PC-9 (cell line): ENCODE measurements at regions of chr16 and their contacts with region 1.

Region 1: GRCh38 chr16:66872943-66873684 is 7.2 kb upstream of the PDP2 start:
- DNase-seq: peak; percentile 90 to 93
- H3K4me3 ChIP-seq: peak overlapping the region; percentile 64
- H3K27ac ChIP-seq: peak overlapping the region; percentile 42
- H3K4me1 ChIP-seq: peaks cover 7% of the 10 kb centered on the region
- H3K27me3 ChIP-seq: no peaks in the 10 kb centered on the region
- CTCF ChIP-seq: peak; percentile 91

Region 2: GRCh38 chr16:66660422-66661209 is 212.5 kb before region 1 on chr16:
- CTCF ChIA-PET with region 1: interaction called, 13 read pairs
- POLR2A ChIA-PET with region 1: interaction called, 7 read pairs
- intact Hi-C with region 1: no loop called
- DNase-seq: peak in 1 of 2 experiments; percentile 69
- H3K4me3 ChIP-seq: no peak overlapping the region
- H3K27ac ChIP-seq: peak overlapping the region; percentile 49; the same call in 1 of the 2 replicates
- H3K4me1 ChIP-seq: no peaks in the 10 kb centered on the region
- H3K27me3 ChIP-seq: no peaks in the 10 kb centered on the region
- CTCF ChIP-seq: no peak

Region 3: GRCh38 chr16:66728117-66728787 is 144.9 kb before region 1 on chr16:
- CTCF ChIA-PET with region 1: no interaction called
- POLR2A ChIA-PET with region 1: no interaction called
- intact Hi-C with region 1: loop called (anchors 1 kb)
- DNase-seq: peak in 1 of 2 experiments; percentile 48
- H3K4me3 ChIP-seq: no peak overlapping the region
- H3K27ac ChIP-seq: no peak overlapping the region
- H3K4me1 ChIP-seq: no peaks in the 10 kb centered on the region
- H3K27me3 ChIP-seq: no peaks in the 10 kb centered on the region
- CTCF ChIP-seq: peak; percentile 82

Region 4: GRCh38 chr16:66740010-66740409 is 133.1 kb before region 1 on chr16:
- CTCF ChIA-PET with region 1: no interaction called
- POLR2A ChIA-PET with region 1: no interaction called
- intact Hi-C with region 1: loop called (anchors 5 kb)
- DNase-seq: no peak
- H3K4me3 ChIP-seq: no peak overlapping the region
- H3K27ac ChIP-seq: no peak overlapping the region
- H3K4me1 ChIP-seq: peaks cover 36% of the 10 kb centered on the region
- H3K27me3 ChIP-seq: no peaks in the 10 kb centered on the region
- CTCF ChIP-seq: peak; percentile 76

Region 5: DNA sequence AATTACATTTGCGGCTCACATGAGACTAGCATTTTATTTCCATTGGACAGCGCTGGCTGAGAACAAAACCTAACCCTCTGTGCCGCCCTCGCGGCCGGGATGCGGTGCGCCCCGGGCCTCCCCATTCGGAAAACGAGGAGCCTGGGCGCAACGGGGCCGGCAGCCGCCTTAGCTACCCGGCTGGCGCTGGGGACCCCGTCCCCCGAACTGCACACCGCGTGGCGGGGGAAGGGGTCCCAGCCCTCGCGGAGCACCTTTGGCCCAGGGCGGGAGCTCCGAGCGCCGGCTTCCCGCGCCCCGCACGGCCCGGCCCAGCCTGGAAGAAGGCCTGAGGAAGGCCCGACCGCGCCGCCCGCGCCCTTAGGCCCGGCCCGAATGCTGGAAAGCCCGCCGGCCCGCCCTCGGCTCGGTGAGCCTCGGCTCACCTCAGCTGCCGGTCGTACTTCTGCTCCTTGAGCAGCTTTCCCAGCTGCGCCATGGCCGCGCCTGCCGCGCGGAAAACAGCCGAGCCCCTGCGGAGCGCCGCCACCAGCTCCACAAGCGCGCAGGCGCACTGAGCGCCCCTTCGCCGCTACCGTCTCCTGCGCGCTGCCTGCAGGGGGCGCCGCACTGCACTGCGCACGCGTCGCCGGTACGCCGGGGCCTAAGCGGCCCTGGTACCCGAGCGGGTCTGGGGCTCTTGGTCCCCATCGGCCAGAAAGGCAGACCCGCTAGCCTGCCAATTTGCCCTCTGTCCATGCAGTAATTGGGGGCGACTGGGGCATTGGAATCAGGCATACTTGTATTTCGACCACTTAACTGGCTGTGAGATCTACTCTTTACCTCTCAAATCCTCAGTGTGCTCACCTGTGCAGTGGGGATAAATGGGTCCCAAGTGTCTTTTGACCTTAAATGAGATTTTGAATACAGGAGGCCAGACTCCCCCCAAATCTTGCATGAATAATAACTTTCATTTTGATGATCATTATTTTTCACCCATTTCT is 42.4 kb before region 1 on chr16 and contains the start of gene NAE1:
- CTCF ChIA-PET with region 1: interaction called, 15 read pairs
- POLR2A ChIA-PET with region 1: interaction called, 3 read pairs
- intact Hi-C with region 1: loop called (anchors 2 kb)
- DNase-seq: peak; percentile 68 to 88
- H3K4me3 ChIP-seq: peak within 1 kb of the TSS; percentile 95
- H3K27ac ChIP-seq: peak within 1 kb of the TSS; percentile 61; the same call in 1 of the 2 replicates
- H3K4me1 ChIP-seq: peaks cover 36% of the 10 kb centered on the region
- H3K27me3 ChIP-seq: no peaks in the 10 kb centered on the region
- CTCF ChIP-seq: peak; percentile 91
- total RNA-seq, gene NAE1: 66.8 and 72.7 TPM in 2 replicates

Region 6: GRCh38 chr16:66858740-66859396 is 14.2 kb before region 1 on chr16:
- CTCF ChIA-PET with region 1: interaction called, 30 read pairs
- POLR2A ChIA-PET with region 1: no interaction called
- intact Hi-C with region 1: no loop called
- DNase-seq: peak; percentile 72 to 76
- H3K4me3 ChIP-seq: no peak overlapping the region
- H3K27ac ChIP-seq: no peak overlapping the region
- H3K4me1 ChIP-seq: no peaks in the 10 kb centered on the region
- H3K27me3 ChIP-seq: no peaks in the 10 kb centered on the region
- CTCF ChIP-seq: no peak

Region 7: DNA sequence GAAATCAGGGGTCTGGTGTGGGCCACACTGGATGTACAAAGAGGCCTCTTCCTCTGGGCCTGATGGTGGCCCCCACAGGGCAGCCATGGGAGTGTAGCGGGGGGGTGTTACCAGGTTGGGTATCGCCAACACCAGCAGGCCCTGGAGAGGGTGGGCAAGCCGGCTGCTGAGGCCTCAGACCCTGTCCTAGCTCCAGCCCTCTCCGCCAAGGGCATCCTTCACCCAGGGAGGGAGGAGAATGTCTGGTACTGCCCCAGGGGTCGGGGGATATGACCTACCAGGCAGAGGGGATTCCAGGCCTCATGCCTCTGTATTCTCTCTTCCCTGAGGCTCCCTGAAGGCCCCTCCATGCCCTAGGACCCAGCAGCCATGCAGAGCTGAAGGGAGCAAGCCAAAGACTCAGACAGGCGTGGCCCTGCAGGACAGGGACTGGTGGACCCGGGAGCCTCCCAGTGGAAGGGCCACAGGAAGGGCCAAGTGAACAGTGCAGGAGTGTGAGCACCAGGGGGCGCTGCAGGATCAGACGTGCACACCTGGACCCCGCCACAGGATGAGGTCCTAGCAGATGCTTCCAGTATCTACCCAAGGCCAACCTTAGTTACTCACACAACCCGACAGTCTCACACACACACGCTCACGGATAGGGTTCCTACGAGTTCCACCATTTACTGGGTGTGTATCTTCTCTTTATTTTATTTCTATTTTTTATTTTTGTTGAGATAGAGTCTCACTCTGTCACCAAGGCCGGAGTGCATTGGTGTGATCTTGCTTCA is 104.4 kb after region 1 on chr16:
- CTCF ChIA-PET with region 1: no interaction called
- POLR2A ChIA-PET with region 1: no interaction called
- intact Hi-C with region 1: no loop called
- DNase-seq: peak; percentile 62 to 82
- H3K4me3 ChIP-seq: no peak overlapping the region
- H3K27ac ChIP-seq: no peak overlapping the region
- H3K4me1 ChIP-seq: no peaks in the 10 kb centered on the region
- H3K27me3 ChIP-seq: no peaks in the 10 kb centered on the region
- CTCF ChIP-seq: peak; percentile 96

Region 8: GRCh38 chr16:67055712-67056487 is 182.8 kb after region 1 on chr16:
- CTCF ChIA-PET with region 1: no interaction called
- POLR2A ChIA-PET with region 1: no interaction called
- intact Hi-C with region 1: no loop called
- DNase-seq: peak in 1 of 2 experiments; percentile 80
- H3K4me3 ChIP-seq: no peak overlapping the region
- H3K27ac ChIP-seq: no peak overlapping the region
- H3K4me1 ChIP-seq: peaks cover 12% of the 10 kb centered on the region
- H3K27me3 ChIP-seq: no peaks in the 10 kb centered on the region
- CTCF ChIP-seq: no peak